PC-9 (cell line): ENCODE measurements at regions of chr15 and their contacts with region 1.

Region 1: GRCh38 chr15:22915866-22916515 is 64.2 kb downstream of the CYFIP1 start:
- DNase-seq: no peak
- H3K4me3 ChIP-seq: no peak overlapping the region
- H3K27ac ChIP-seq: no peak overlapping the region
- H3K4me1 ChIP-seq: no peaks in the 10 kb centered on the region
- H3K27me3 ChIP-seq: no peaks in the 10 kb centered on the region
- CTCF ChIP-seq: no peak

Region 2: GRCh38 chr15:22884344-22884743 is 31.6 kb before region 1 on chr15:
- CTCF ChIA-PET with region 1: no interaction called
- POLR2A ChIA-PET with region 1: no interaction called
- intact Hi-C with region 1: no loop called
- DNase-seq: no peak
- H3K4me3 ChIP-seq: no peak overlapping the region
- H3K27ac ChIP-seq: no peak overlapping the region
- H3K4me1 ChIP-seq: no peaks in the 10 kb centered on the region
- H3K27me3 ChIP-seq: no peaks in the 10 kb centered on the region
- CTCF ChIP-seq: no peak

Region 3: GRCh38 chr15:22895469-22896190 is 20.4 kb before region 1 on chr15:
- CTCF ChIA-PET with region 1: no interaction called
- POLR2A ChIA-PET with region 1: no interaction called
- intact Hi-C with region 1: loop called (anchors 2 kb)
- DNase-seq: peak; percentile 90 to 95
- H3K4me3 ChIP-seq: no peak overlapping the region
- H3K27ac ChIP-seq: peak overlapping the region; percentile 74
- H3K4me1 ChIP-seq: peaks cover 23% of the 10 kb centered on the region
- H3K27me3 ChIP-seq: no peaks in the 10 kb centered on the region
- CTCF ChIP-seq: no peak